Activated CD8-positive, alpha-beta T cell treated with anti-CD3 and anti-CD28 coated beads for 36 hours (primary cell): ENCODE measurements at regions of chr6 and their contacts with region 1.

Region 1: DNA sequence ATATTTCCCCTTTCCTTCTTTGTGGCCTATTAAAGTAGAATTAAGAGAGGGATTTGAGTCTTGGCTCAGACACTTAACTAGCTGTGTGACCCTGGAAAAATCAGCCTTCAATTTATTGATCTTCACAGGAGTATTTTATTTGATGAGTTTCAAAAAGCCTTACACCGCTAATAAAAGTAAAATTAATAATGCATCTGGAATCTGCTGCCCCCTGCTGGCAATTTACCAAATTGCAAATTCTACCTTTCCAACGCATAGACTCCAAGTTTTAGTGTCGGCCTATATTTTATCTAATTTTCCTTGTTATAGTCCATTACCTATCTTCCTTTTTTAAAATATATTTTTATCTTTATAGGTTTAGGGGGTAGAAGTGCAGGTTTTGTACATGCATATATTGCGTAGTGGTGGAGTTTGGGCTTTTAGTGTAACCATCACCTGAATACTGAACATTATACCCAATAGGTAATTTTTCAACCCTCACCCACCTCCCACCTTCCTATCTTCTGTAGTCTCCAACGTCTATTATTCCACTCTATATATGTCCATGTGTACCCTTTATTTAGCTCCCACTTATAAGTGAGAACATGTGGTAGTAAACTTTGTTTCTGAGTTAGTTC is 46.3 kb downstream of the GOPC start:
- DNase-seq: peak; percentile 73
- ATAC-seq: peak; percentile 37
- H3K4me3 Mint-ChIP-seq: no peak overlapping the region
- H3K27ac Mint-ChIP-seq: no peak overlapping the region
- H3K4me1 Mint-ChIP-seq: peaks cover 8% of the 10 kb centered on the region
- H3K27me3 Mint-ChIP-seq: no peaks in the 10 kb centered on the region
- CTCF ChIP-seq: peak; percentile 87

Region 2: DNA sequence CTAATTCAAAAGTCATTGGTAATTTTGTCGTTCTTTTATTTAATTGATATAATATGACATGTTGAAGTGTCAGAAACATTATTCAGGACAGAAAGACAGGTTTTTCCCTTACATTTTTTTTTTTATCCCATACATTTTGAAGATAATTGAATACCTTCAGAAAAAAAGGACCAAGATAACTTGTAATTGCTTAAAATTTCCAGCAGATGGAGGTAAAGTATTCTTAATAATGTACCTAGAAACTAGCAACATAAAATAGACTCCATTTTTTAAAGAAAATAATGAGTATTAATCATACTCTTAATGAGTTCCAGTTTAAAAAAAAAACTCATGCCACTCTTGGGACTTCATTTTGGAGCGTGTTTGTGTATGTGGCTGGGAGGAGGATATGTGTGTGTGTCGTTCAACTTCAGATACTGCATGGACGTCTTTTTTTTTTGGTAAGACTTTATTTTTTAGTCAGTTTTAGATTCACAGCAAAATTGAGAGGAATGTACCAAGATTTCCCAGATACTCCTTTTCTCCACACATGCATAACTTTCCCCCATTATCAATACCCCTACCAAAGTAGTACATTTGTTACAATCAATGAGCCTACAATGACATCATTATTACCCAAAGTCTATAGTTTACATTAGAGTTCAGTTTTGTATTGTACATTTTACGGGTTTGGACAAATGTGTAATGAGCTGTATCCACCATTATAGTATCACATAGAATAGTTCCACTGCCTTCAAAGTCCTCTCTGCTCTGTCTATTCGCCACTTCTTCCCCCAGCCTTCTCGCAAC is 209.7 kb before region 1 on chr6:
- CTCF ChIA-PET with region 1: interaction called, 3 read pairs
- POLR2A ChIA-PET with region 1: no interaction called
- intact Hi-C with region 1: loop called (anchors 5 kb)
- DNase-seq: no peak
- ATAC-seq: peak; percentile 39
- H3K4me3 Mint-ChIP-seq: no peak overlapping the region
- H3K27ac Mint-ChIP-seq: no peak overlapping the region
- H3K4me1 Mint-ChIP-seq: no peaks in the 10 kb centered on the region
- H3K27me3 Mint-ChIP-seq: peaks cover 7% of the 10 kb centered on the region
- CTCF ChIP-seq: peak; percentile 65

Region 3: GRCh38 chr6:117449549-117450439 is 106.2 kb before region 1 on chr6:
- CTCF ChIA-PET with region 1: interaction called, 231 read pairs
- POLR2A ChIA-PET with region 1: interaction called, 3 read pairs
- intact Hi-C with region 1: loop called (anchors 2 kb)
- DNase-seq: peak; percentile 79
- ATAC-seq: no peak
- H3K4me3 Mint-ChIP-seq: no peak overlapping the region
- H3K27ac Mint-ChIP-seq: no peak overlapping the region
- H3K4me1 Mint-ChIP-seq: no peaks in the 10 kb centered on the region
- H3K27me3 Mint-ChIP-seq: peaks cover 23% of the 10 kb centered on the region
- CTCF ChIP-seq: peak; percentile 86

Region 4: GRCh38 chr6:117482240-117483003 is 73.6 kb before region 1 on chr6 and contains the start of gene DCBLD1:
- CTCF ChIA-PET with region 1: interaction called, 47 read pairs
- POLR2A ChIA-PET with region 1: interaction called, 5 read pairs
- intact Hi-C with region 1: no loop called
- DNase-seq: peak; percentile 57
- ATAC-seq: peak; percentile 82
- H3K4me3 Mint-ChIP-seq: peak within 1 kb of the TSS; percentile 80
- H3K27ac Mint-ChIP-seq: peak within 1 kb of the TSS; percentile 56
- H3K4me1 Mint-ChIP-seq: peaks cover 13% of the 10 kb centered on the region
- H3K27me3 Mint-ChIP-seq: peaks cover 43% of the 10 kb centered on the region
- CTCF ChIP-seq: no peak
- total RNA-seq, gene DCBLD1: 2.2 to 2.3 TPM

Region 5: GRCh38 chr6:117498159-117498558 is 57.8 kb before region 1 on chr6:
- CTCF ChIA-PET with region 1: no interaction called
- POLR2A ChIA-PET with region 1: no interaction called
- intact Hi-C with region 1: no loop called
- DNase-seq: no peak
- ATAC-seq: no peak
- H3K4me3 Mint-ChIP-seq: no peak overlapping the region
- H3K27ac Mint-ChIP-seq: no peak overlapping the region
- H3K4me1 Mint-ChIP-seq: peaks cover 11% of the 10 kb centered on the region
- H3K27me3 Mint-ChIP-seq: no peaks in the 10 kb centered on the region
- CTCF ChIP-seq: no peak

Region 6: DNA sequence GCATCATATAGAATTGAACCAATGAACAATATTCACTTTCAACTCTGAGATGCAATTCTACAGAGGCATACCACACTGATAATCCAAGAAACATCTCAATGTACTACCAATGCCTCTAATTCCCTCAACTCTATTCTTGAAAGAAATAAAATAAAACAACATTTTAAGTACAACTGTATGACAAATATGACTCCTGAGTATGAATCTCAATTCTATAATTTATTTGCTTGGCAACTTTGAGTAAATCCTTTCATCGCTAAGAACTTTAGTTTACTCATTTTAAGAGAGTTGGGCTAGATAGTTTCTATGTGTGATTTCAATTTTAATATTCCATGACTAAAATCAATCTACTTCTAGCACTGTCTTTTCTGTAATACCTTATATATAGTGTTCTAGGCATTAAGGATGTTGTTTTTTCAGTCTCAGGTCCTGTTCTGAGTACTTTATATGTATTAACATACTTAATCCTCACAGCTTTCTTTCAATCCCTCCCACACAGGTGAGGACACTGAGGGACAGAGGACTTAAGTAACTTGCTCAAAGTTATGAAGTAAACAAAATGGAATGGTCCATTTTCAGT is 12.9 kb after region 1 on chr6:
- CTCF ChIA-PET with region 1: interaction called, 21 read pairs
- POLR2A ChIA-PET with region 1: no interaction called
- intact Hi-C with region 1: no loop called
- DNase-seq: no peak
- ATAC-seq: peak; percentile 80
- H3K4me3 Mint-ChIP-seq: no peak overlapping the region
- H3K27ac Mint-ChIP-seq: no peak overlapping the region
- H3K4me1 Mint-ChIP-seq: peaks cover 5% of the 10 kb centered on the region
- H3K27me3 Mint-ChIP-seq: no peaks in the 10 kb centered on the region
- CTCF ChIP-seq: no peak

Region 7: DNA sequence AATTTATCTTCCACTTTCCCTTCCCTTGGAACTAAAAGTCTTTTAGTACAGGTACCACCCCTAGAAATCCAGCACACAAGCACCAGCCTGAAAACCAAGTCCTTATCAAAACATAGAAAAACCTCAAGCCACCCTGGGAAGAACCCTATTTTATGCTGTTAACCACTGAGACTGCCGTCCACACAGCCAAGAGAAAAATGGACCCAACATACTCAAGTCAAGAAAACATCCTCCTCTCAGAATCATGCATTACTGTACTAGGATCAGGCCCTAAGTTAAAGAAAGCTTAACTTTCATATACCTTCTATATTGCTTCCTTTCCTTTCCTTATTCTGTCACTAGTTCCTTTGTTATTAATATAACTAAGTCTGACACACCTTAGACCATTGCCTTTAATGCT is 63.2 kb after region 1 on chr6:
- CTCF ChIA-PET with region 1: no interaction called
- POLR2A ChIA-PET with region 1: no interaction called
- intact Hi-C with region 1: no loop called
- DNase-seq: no peak
- ATAC-seq: no peak
- H3K4me3 Mint-ChIP-seq: no peak overlapping the region
- H3K27ac Mint-ChIP-seq: peak overlapping the region; percentile 0
- H3K4me1 Mint-ChIP-seq: peaks cover 24% of the 10 kb centered on the region
- H3K27me3 Mint-ChIP-seq: no peaks in the 10 kb centered on the region
- CTCF ChIP-seq: no peak